ENCODE measurements at regions of chrX and their contacts with region 1.

Region 1: DNA sequence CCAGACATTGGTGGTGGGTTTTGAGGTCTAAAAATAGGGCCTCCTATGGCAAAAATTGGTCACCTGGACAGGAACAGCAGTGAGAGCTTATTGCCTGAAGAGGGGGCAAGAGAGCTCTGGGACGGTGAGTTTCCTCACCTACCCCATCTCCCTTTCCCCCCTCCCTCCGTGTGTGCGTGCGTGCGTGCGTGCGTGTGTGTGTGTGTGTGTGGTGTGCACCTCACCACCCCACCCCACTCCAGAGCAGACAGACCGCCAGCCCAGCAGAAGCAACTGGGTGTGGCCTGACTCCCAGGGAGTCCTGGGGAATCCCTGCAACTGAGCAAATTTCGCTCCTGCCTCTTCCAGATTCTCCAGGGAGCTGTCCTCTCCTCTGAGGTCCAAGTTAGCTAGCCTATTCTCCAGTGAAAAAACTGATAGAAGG is 44.7 kb downstream of the PRPS1 start:
- DNase-seq: peak; percentile 81
- H3K4me3 Mint-ChIP-seq: peak overlapping the region; percentile 22
- H3K27ac Mint-ChIP-seq: peak overlapping the region; percentile 74
- H3K4me1 Mint-ChIP-seq: peaks cover 50% of the 10 kb centered on the region
- H3K27me3 Mint-ChIP-seq: no peaks in the 10 kb centered on the region

Region 2: GRCh38 chrX:107470972-107471371 is 202.0 kb before region 1 on chrX:
- CTCF ChIA-PET with region 1: no interaction called
- intact Hi-C with region 1: no loop called
- DNase-seq: no peak
- H3K4me3 Mint-ChIP-seq: no peak overlapping the region
- H3K27ac Mint-ChIP-seq: no peak overlapping the region
- H3K4me1 Mint-ChIP-seq: no peaks in the 10 kb centered on the region
- H3K27me3 Mint-ChIP-seq: peaks cover 3% of the 10 kb centered on the region

Region 3: DNA sequence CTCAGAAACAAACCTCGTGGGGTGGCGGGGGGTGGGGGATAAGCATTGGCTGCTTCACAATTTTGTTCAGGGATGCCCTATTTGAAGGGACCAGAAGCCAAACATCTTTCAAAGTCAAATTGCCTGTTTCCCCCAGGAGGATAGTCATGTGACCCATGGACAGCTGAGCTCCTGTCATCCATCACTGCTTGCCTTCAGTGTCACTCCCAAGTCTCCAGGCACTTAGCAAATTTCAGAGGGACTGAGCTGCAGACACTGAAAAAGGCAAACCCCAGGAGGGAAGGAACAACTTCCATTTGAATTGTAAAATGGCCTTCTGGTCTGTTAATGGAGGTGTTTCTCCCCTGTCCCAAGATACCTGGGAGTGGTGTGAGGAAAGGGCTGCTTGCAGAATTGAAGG is 150.1 kb before region 1 on chrX:
- CTCF ChIA-PET with region 1: no interaction called
- intact Hi-C with region 1: no loop called
- DNase-seq: no peak
- H3K4me3 Mint-ChIP-seq: no peak overlapping the region
- H3K27ac Mint-ChIP-seq: no peak overlapping the region
- H3K4me1 Mint-ChIP-seq: no peaks in the 10 kb centered on the region
- H3K27me3 Mint-ChIP-seq: peaks cover 4% of the 10 kb centered on the region

Region 4: GRCh38 chrX:107710617-107711391 is 37.8 kb after region 1 on chrX:
- CTCF ChIA-PET with region 1: interaction called, 171 read pairs
- intact Hi-C with region 1: loop called (anchors 1 kb)
- DNase-seq: peak; percentile 67
- H3K4me3 Mint-ChIP-seq: peak overlapping the region; percentile 53
- H3K27ac Mint-ChIP-seq: peak overlapping the region; percentile 90
- H3K4me1 Mint-ChIP-seq: peaks cover 46% of the 10 kb centered on the region
- H3K27me3 Mint-ChIP-seq: no peaks in the 10 kb centered on the region

Region 5: GRCh38 chrX:107741404-107741790 is 68.4 kb after region 1 on chrX:
- CTCF ChIA-PET with region 1: interaction called, 14 read pairs
- intact Hi-C with region 1: loop called (anchors 1 kb)
- DNase-seq: no peak
- H3K4me3 Mint-ChIP-seq: peak overlapping the region; percentile 77
- H3K27ac Mint-ChIP-seq: peak overlapping the region; percentile 94
- H3K4me1 Mint-ChIP-seq: peaks cover 40% of the 10 kb centered on the region
- H3K27me3 Mint-ChIP-seq: no peaks in the 10 kb centered on the region

Region 6: GRCh38 chrX:107849740-107850421 is 176.9 kb after region 1 on chrX:
- CTCF ChIA-PET with region 1: no interaction called
- intact Hi-C with region 1: loop called (anchors 2 kb)
- DNase-seq: peak; percentile 46
- H3K4me3 Mint-ChIP-seq: no peak overlapping the region
- H3K27ac Mint-ChIP-seq: peak overlapping the region; percentile 54
- H3K4me1 Mint-ChIP-seq: no peaks in the 10 kb centered on the region
- H3K27me3 Mint-ChIP-seq: no peaks in the 10 kb centered on the region

Region 7: DNA sequence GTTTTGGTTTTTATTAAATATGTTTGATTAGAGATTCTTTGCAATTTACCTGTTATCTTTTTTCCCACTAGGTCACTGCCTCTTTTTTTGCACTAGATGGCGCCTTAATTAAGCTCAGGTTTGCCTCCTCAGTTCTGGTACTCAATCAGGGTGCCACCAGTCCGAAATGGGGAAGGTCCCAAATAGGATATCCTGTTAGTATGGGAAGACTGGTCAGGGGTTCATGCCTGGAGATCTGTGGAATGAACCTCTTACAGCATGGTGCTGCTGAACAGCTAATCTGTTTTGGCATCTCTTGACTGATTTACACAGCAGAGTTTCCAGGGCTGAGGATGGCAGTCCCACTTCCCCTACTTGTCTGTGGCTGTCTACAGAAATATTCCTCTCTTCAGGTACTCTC is 347.7 kb after region 1 on chrX:
- CTCF ChIA-PET with region 1: no interaction called
- intact Hi-C with region 1: loop called (anchors 2 kb)
- DNase-seq: no peak
- H3K4me3 Mint-ChIP-seq: peak overlapping the region; percentile 36
- H3K27ac Mint-ChIP-seq: peak overlapping the region; percentile 72
- H3K4me1 Mint-ChIP-seq: peaks cover 58% of the 10 kb centered on the region
- H3K27me3 Mint-ChIP-seq: no peaks in the 10 kb centered on the region

Region 8: DNA sequence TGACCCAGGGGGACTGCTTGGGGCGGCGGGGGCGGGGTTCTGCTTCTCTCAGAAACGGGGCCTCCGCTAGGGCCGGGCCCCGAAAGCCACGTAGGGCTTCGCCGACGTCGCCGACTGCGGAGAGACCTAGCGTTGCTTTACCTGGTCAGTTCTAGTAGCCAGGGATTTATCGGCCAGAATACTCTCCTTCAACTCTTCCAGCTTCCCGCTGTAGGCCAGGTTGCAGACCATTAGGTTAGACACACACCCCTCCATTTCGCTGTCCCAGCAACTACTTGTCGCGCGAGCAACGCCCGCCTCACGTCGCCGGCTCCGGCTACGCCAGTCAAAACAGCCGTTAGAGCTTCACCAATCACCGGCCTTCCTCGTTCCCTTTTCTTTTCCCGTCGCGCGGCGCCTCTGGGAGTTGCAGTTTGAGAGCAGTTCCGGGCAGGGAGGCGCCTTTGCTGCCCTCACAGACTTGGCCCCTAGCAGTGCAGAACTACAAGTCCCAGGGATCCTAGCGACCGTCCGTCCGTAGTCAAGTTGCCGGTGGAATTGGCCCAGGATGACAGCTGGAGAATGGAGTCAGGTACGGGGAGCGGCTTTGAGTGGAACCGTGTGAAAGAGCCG is 418.4 kb after region 1 on chrX and contains the starts of genes ATG4A and PSMD10:
- CTCF ChIA-PET with region 1: no interaction called
- intact Hi-C with region 1: loop called (anchors 1 kb)
- DNase-seq: peak; percentile 94
- H3K4me3 Mint-ChIP-seq: no peak within 1 kb of the TSS
- H3K27ac Mint-ChIP-seq: no peak within 1 kb of the TSS
- H3K4me1 Mint-ChIP-seq: peaks cover 19% of the 10 kb centered on the region
- H3K27me3 Mint-ChIP-seq: no peaks in the 10 kb centered on the region
- total RNA-seq, gene ATG4A: 8.2 to 8.6 TPM
- total RNA-seq, gene PSMD10: 54.6 to 58.8 TPM

Measured in activated naive CD4-positive, alpha-beta T cell treated with anti-CD3 and anti-CD28 coated beads for 36 hours (primary cell).